Endothelial cell of umbilical vein (primary cell): ENCODE measurements at regions of chr9 and their contacts with region 1.

Region 1: DNA sequence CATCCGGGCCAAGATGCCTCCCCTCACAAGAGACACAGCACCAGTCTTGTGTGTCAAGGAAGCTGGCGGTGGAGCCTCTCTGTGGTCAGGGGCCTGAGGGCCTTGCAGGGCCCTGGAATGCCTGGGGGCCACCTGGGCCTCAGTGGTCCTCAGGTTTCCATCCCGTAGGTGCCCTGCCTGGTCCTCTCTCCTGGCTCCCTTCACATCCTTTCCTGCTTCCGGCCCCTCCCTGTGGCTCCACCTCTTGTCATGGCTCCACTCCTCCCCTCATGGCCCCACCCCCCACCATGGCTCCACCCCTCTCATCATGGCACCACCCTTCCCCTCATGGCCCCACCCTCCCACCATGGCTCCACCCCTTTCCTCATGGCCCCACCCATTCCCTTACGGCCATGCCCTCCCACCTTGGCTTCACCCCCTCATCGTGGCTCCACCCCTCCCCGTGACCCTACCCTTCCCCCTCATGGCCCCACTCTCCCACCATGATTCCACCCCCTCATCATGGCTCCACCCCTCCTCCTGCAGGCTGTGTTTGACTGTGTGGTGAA is 175.8 kb downstream of the CACNA1B start:
- DNase-seq: no peak
- H3K4me3 ChIP-seq: no peak overlapping the region
- H3K27ac ChIP-seq: no peak overlapping the region
- H3K4me1 ChIP-seq: no peaks in the 10 kb centered on the region
- H3K27me3 ChIP-seq: no peaks in the 10 kb centered on the region
- CTCF ChIP-seq: no peak
- POLR2A ChIP-seq: no peak

Region 2: DNA sequence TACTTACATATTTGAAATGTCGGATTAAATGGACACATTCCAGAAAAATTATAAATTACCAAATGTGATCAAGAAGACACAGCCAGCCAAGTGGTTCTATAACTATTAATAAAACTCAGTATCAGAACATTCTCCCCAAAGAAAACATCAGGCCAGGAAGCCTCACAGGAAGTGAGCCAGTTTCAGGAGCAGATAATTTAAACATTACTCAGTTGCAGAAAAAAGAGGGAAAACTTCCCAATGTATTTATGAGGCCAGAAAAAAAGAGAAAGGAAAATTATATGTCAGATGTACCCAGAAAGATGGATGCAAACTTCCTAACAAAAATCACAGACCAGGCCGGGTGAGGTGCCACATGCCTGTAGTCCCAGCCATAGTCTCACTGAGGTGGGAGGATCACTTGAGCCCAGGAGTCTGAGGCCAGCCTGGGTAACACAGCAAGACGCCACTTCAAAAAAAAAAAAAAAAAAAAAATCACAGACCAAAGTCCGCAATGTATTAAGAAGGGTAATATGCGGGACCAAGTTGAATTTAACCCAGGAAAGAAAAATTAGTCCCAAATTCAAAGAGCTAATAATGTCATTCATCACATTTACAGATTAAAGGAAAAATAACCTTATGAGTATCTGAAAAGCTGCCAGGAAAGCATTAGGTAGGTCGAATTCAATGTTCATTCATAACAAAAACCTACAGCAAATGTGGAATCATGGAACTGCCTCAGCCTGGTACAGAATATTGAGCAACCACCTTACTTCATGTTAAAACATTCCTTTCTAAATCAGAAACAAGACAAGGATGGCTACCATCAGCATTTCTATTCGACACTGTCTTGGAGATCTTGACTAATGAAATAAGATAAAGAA is 714.1 kb before region 1 on chr9:
- CTCF ChIA-PET with region 1: no interaction called
- POLR2A ChIA-PET with region 1: no interaction called
- dilution Hi-C with region 1: no loop called
- intact Hi-C with region 1: loop called (anchors 10 kb)
- DNase-seq: peak; percentile 81
- H3K4me3 ChIP-seq: peak overlapping the region in 1 of 3 experiments; percentile 56
- H3K27ac ChIP-seq: peak overlapping the region; percentile 94
- H3K4me1 ChIP-seq: peaks cover 26% of the 10 kb centered on the region
- H3K27me3 ChIP-seq: no peaks in the 10 kb centered on the region
- CTCF ChIP-seq: no peak
- POLR2A ChIP-seq: no peak

Region 3: GRCh38 chr9:137731216-137731946 is 322.0 kb before region 1 on chr9:
- CTCF ChIA-PET with region 1: no interaction called
- POLR2A ChIA-PET with region 1: no interaction called
- dilution Hi-C with region 1: no loop called
- intact Hi-C with region 1: no loop called
- DNase-seq: no peak
- H3K4me3 ChIP-seq: no peak overlapping the region
- H3K27ac ChIP-seq: no peak overlapping the region
- H3K4me1 ChIP-seq: no peaks in the 10 kb centered on the region
- H3K27me3 ChIP-seq: no peaks in the 10 kb centered on the region
- CTCF ChIP-seq: no peak
- POLR2A ChIP-seq: no peak

Region 4: GRCh38 chr9:137989999-137990715 is 63.2 kb before region 1 on chr9:
- CTCF ChIA-PET with region 1: no interaction called
- POLR2A ChIA-PET with region 1: no interaction called
- dilution Hi-C with region 1: no loop called
- intact Hi-C with region 1: no loop called
- DNase-seq: no peak
- H3K4me3 ChIP-seq: no peak overlapping the region
- H3K27ac ChIP-seq: no peak overlapping the region
- H3K4me1 ChIP-seq: no peaks in the 10 kb centered on the region
- H3K27me3 ChIP-seq: no peaks in the 10 kb centered on the region
- CTCF ChIP-seq: no peak
- POLR2A ChIP-seq: no peak

Region 5: DNA sequence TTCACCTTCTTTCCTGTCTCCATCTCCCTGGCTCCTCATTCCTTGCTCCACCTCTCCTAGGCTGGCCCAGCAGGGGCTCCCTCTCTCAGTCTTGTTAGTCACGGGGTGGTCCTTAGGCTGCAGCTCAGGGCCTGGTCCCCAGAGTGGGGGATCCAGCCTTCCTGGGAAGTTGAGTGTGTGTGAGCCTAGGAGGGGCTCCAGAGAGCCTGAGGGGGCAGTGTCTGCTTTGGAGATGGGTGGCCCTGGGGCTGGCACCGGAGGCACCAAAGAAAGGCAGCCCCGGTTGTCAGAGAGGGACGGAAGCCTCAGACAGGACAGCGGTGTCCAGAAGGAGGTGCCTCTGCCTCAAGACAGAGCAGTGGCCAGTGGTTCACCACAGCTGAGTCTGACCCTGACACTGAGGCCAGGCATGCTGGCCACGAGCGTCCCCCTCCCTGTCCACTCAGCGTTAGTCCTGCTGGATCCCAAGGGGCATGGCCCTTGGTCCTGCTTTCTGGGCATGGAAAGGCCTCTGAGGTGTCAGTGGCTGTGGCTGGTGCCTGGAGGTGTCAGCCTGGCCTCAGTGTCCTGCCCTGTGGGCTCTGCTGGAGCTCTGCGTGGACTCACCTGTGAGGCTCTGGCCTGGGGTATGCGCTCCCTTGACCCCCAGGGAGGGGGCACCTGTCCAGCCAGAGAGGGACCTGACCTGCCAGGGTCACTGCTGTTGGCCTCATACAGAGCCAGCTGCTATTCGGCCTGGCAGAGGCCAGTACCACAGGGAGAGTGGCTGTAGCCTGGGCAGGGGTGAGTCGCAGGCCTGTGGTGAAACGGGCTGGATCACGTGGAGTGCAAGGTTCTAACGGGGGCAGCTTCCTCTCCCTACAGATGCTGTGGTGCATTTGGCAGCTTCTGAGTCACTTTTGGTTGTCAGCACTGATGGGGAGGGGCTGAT is 45.2 kb before region 1 on chr9:
- CTCF ChIA-PET with region 1: no interaction called
- POLR2A ChIA-PET with region 1: no interaction called
- dilution Hi-C with region 1: no loop called
- intact Hi-C with region 1: no loop called
- DNase-seq: no peak
- H3K4me3 ChIP-seq: no peak overlapping the region
- H3K27ac ChIP-seq: no peak overlapping the region
- H3K4me1 ChIP-seq: no peaks in the 10 kb centered on the region
- H3K27me3 ChIP-seq: no peaks in the 10 kb centered on the region
- CTCF ChIP-seq: no peak
- POLR2A ChIP-seq: no peak

Region 6: GRCh38 chr9:138100711-138101349 is 47.4 kb after region 1 on chr9:
- CTCF ChIA-PET with region 1: no interaction called
- POLR2A ChIA-PET with region 1: no interaction called
- dilution Hi-C with region 1: no loop called
- intact Hi-C with region 1: no loop called
- DNase-seq: no peak
- H3K4me3 ChIP-seq: no peak overlapping the region
- H3K27ac ChIP-seq: no peak overlapping the region
- H3K4me1 ChIP-seq: no peaks in the 10 kb centered on the region
- H3K27me3 ChIP-seq: no peaks in the 10 kb centered on the region
- CTCF ChIP-seq: no peak
- POLR2A ChIP-seq: no peak